Mucosa of descending colon (tissue), 3 donors: ENCODE measurements at regions of chr3 and their contacts with region 1.

Region 1: DNA sequence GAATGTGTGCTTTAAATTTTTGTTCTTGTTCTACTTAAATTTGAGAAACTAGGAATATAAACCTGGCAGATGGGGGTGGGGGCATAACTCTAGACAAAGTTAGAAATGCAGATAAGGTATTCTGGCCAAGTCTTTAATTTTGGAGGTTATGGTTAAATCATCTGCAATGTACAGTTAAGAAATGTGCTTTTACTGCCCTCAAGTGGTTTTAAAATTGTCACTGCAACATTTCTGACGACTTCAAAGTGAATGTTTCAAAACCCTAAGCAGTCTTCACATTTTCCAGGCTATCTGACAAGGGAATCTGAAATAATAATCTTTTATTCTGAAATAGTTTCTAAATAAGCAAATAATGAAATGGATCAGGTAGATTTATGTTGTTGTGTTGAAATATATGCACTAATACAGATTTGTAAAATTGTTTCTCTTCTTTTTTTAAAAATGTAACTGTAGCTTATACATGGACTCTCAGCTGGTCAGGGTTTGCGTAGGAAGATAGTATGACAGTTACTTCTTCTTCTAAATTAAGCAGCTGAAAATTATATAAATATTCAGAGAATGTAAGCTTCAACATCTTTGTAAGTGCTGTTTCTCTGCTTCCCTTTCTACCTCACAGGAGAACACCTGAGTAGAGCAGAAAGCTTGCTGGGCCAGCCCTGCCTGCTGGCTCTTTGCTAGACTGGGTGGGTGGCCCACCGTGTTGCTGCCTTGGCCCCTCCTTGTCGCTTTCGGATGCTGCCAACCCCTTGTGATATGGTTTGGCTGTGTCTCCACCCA is 45.0 kb downstream of the SUCNR1 start:
- DNase-seq: peak in 1 of 3 donors; percentile 5
- ATAC-seq: peak; percentile 56
- H3K4me3 ChIP-seq: no peak overlapping the region
- H3K4me1 ChIP-seq: no peaks in the 10 kb centered on the region
- CTCF ChIP-seq: no peak

Region 2: DNA sequence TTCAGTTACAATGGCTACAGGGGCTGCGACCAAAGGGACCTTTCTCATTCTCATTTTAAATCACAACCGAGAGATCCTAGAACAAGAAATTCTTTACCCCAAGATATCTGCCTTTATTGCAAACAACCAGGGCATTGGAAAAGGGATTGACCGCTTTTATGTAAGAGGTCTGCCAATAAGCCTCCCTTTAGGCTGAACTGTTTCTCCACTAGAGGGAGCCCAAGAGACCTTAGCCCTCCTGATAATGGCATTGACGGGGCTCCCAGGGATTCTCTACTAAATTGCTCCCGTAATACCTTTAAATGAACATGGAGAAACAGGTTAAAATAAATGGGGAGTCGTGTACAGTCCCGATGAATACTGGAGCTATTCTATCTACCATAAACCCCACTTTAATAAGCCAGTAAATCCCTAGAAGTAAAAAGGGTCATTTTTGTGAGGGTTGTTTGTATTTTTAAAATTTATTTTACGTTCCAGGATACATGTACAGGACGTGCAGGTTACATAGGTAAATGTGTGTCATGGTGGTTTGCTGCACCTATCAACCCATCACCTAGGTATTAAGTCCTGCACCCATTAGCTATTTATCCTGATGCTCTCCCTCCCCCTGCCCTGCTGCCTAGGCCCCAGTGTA is 450.0 kb before region 1 on chr3:
- intact Hi-C with region 1: loop called in 1 of 2 experiments (anchors 10 kb)
- DNase-seq: peak in 1 of 3 donors; percentile 76
- ATAC-seq: peak; percentile 76
- H3K4me3 ChIP-seq: no peak overlapping the region
- H3K4me1 ChIP-seq: no peaks in the 10 kb centered on the region
- CTCF ChIP-seq: peak; percentile 74

Region 3: GRCh38 chr3:151675858-151676615 is 242.4 kb before region 1 on chr3:
- intact Hi-C with region 1: no loop called
- DNase-seq: no peak
- ATAC-seq: no peak
- H3K4me3 ChIP-seq: no peak overlapping the region
- H3K4me1 ChIP-seq: no peaks in the 10 kb centered on the region
- CTCF ChIP-seq: no peak